Common myeloid progenitor, CD34-positive (primary cell): ENCODE measurements at regions of chr4 and their contacts with region 1.

Region 1: DNA sequence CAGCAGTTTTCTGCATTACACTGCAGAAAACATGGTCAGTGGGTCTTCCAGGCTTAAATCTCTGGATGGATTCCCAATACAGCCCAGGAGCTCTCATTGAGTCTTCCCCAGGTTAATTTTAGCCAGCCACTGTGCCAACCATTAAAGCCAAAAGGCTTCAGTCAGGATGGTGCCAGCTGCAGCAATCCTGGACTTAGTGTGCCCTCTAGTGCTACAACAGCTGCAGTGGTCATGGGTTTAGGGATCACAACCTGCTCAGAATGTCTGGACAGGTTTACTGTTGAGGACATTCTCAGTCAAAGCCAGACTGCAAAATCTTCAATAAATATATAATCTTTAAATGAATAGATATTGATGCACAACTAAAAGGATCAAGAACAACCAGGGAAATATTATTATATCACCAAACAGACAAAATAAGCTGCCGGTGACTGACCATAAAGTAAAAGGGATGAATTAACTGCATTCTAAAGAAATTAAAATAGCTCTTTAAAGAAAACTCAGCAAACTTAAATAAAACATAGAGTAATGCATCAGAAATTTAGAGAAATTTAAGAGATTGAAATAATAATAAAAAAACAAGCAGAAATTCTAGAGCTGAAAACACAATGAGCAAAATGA is 639.9 kb downstream of the SPOCK3 start:
- DNase-seq: peak; percentile 36 to 63 (median 58)
- H3K4me3 ChIP-seq: peak overlapping the region in 1 of 7 experiments; percentile 16
- H3K27ac ChIP-seq: no peak overlapping the region
- H3K4me1 ChIP-seq: no peaks in the 10 kb centered on the region
- H3K27me3 ChIP-seq: peaks cover 0 to 2% (median 0%) of the 10 kb centered on the region in 5 experiments

Region 2: GRCh38 chr4:166165829-166166420 is 428.5 kb before region 1 on chr4:
- CTCF ChIA-PET with region 1: interaction called, 31 read pairs
- POLR2A ChIA-PET with region 1: interaction called, 4 read pairs
- DNase-seq: peak; percentile 73 to 86 (median 78)
- H3K4me3 ChIP-seq: no peak overlapping the region
- H3K27ac ChIP-seq: no peak overlapping the region
- H3K4me1 ChIP-seq: no peaks in the 10 kb centered on the region
- H3K27me3 ChIP-seq: no peaks in the 10 kb centered on the region

Region 3: DNA sequence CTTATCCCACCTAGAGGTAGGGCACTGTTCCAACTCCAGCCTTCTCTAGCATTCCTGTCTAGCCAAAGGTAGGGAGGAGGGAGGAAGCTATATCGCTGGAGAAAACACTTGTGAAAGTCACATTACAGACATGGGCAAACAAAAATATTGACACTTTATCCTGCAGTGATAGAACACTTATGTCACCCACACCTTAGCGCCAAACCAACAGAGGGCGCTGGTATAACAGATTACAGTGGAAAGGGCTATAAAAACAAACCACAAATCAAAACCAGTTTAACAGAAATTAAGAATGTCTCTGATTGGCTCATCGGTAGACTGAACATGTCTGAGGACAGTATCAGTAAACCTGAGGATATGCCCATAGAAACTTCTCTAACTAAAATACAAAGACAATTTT is 270.1 kb before region 1 on chr4:
- CTCF ChIA-PET with region 1: interaction called, 15 read pairs
- POLR2A ChIA-PET with region 1: no interaction called
- DNase-seq: peak; percentile 31 to 53 (median 47)
- H3K4me3 ChIP-seq: no peak overlapping the region
- H3K27ac ChIP-seq: no peak overlapping the region
- H3K4me1 ChIP-seq: no peaks in the 10 kb centered on the region
- H3K27me3 ChIP-seq: no peaks in the 10 kb centered on the region

Region 4: DNA sequence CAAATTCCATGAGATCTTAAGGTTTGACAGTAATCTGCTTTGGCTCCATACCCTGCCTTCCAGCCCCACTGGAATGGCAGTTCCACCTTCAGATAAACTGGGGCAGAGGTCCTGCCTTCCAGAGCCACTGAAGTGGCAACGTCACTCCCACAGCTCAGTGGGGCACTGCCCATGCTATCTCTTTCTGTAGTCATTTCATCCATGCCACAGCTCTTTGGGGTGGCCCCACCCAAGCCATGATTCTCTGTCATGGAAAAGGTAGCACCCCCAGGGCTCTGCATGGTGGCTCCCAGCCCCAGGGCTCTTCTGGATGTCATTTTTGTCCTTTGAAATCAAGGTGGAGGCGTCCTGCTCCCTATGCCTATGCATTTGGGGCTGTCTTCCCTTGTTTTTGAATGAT is 43.4 kb after region 1 on chr4:
- CTCF ChIA-PET with region 1: no interaction called
- POLR2A ChIA-PET with region 1: no interaction called
- DNase-seq: no peak
- H3K4me3 ChIP-seq: no peak overlapping the region
- H3K27ac ChIP-seq: no peak overlapping the region
- H3K4me1 ChIP-seq: no peaks in the 10 kb centered on the region
- H3K27me3 ChIP-seq: no peaks in the 10 kb centered on the region